Heart right ventricle (tissue), 16 donors: ENCODE measurements at regions of chr10 and their contacts with region 1.

Region 1: GRCh38 chr10:25113191-25114035 is 61.4 kb upstream of the GPR158 start:
- DNase-seq: peak; percentile 59 to 70
- ATAC-seq: peak; percentile 72 to 92 (median 85)
- H3K4me3 ChIP-seq: no peak overlapping the region
- H3K27ac ChIP-seq: no peak overlapping the region
- H3K4me1 ChIP-seq: peaks cover 0 to 5% (median 0%) of the 10 kb centered on the region in 9 donors
- H3K27me3 ChIP-seq: peaks cover 0 to 29% (median 3%) of the 10 kb centered on the region in 7 donors
- CTCF ChIP-seq: peak; percentile 35 to 80 (median 77)

Region 2: GRCh38 chr10:25226775-25227682 is 113.6 kb after region 1 on chr10:
- intact Hi-C with region 1: loop called in 7 of 10 experiments (anchors 2 to 10 kb)
- DNase-seq: peak; percentile 13 to 16
- ATAC-seq: peak in 3 of 8 donors; percentile 65 to 72 (median 71)
- H3K4me3 ChIP-seq: no peak overlapping the region
- H3K27ac ChIP-seq: no peak overlapping the region
- H3K4me1 ChIP-seq: no peaks in the 10 kb centered on the region
- H3K27me3 ChIP-seq: no peaks in the 10 kb centered on the region
- CTCF ChIP-seq: peak; percentile 38 to 77 (median 60)

Region 3: GRCh38 chr10:25508112-25508815 is 394.9 kb after region 1 on chr10:
- intact Hi-C with region 1: no loop called
- DNase-seq: no peak
- ATAC-seq: no peak
- H3K4me3 ChIP-seq: no peak overlapping the region
- H3K27ac ChIP-seq: no peak overlapping the region
- H3K4me1 ChIP-seq: no peaks in the 10 kb centered on the region
- H3K27me3 ChIP-seq: no peaks in the 10 kb centered on the region
- CTCF ChIP-seq: no peak

Region 4: GRCh38 chr10:25682203-25682851 is 568.9 kb after region 1 on chr10:
- intact Hi-C with region 1: loop called in 8 of 10 experiments (anchors 5 to 10 kb)
- DNase-seq: peak; percentile 25 to 52
- ATAC-seq: peak; percentile 84 to 93 (median 88)
- H3K4me3 ChIP-seq: peak overlapping the region in 7 of 10 donors; percentile 18 to 49 (median 41)
- H3K27ac ChIP-seq: peak overlapping the region in 8 of 10 donors; percentile 3 to 81 (median 70)
- H3K4me1 ChIP-seq: peaks cover 0 to 16% (median 4%) of the 10 kb centered on the region in 9 donors
- H3K27me3 ChIP-seq: no peaks in the 10 kb centered on the region
- CTCF ChIP-seq: peak in 8 of 9 donors; percentile 15 to 57 (median 48)

Region 5: DNA sequence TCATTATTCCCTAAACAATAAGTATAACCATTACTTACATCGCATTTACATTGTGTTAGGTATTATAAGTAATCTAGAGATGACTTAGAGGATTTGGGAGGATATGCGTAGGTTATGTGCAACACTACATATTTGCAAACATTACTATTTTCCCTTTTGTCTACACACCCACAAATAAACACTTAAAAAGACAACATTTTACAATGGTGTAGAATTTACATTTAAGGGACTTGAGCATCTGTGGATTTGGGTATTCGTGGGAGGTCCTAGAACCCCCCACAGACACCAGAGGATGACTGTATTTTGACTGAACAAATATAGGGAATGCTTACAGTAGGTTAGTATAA is 600.5 kb after region 1 on chr10:
- intact Hi-C with region 1: loop called in 2 of 10 experiments (anchors 5 to 10 kb)
- DNase-seq: no peak
- ATAC-seq: no peak
- H3K4me3 ChIP-seq: no peak overlapping the region
- H3K27ac ChIP-seq: no peak overlapping the region
- H3K4me1 ChIP-seq: no peaks in the 10 kb centered on the region
- H3K27me3 ChIP-seq: peaks cover 0 to 13% (median 3%) of the 10 kb centered on the region in 7 donors
- CTCF ChIP-seq: no peak